Posterior vena cava (tissue), 2 donors: ENCODE measurements at regions of chr16 and their contacts with region 1.

Region 1: GRCh38 chr16:87834623-87835407 is 34.5 kb downstream of the SLC7A5 start:
- DNase-seq: no peak

Region 2: DNA sequence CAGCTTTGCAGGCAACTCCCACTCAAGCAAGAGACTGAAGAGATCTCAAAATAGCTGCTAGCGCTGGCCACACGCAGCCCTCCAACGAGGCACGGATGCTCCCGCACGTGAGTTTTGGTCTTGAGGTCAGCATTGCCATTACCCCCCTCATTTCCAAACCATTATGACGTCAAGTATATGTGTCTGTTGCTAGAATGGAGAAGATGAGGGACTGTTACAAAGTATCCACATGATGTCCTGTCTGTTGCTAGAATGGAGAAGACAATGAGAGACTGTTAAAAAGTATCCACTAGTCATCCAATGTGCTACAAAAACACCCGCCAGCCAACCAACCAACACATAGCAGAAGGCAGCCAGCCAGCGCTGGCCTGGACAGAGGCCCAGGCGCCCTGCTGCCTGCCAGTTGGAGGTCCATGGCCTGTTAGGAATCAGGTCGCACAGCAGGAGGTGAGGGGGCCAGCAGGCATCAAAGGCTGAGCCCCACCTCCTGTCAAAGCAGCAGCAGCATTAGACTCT is 93.8 kb before region 1 on chr16:
- intact Hi-C with region 1: no loop called
- DNase-seq: no peak

Region 3: DNA sequence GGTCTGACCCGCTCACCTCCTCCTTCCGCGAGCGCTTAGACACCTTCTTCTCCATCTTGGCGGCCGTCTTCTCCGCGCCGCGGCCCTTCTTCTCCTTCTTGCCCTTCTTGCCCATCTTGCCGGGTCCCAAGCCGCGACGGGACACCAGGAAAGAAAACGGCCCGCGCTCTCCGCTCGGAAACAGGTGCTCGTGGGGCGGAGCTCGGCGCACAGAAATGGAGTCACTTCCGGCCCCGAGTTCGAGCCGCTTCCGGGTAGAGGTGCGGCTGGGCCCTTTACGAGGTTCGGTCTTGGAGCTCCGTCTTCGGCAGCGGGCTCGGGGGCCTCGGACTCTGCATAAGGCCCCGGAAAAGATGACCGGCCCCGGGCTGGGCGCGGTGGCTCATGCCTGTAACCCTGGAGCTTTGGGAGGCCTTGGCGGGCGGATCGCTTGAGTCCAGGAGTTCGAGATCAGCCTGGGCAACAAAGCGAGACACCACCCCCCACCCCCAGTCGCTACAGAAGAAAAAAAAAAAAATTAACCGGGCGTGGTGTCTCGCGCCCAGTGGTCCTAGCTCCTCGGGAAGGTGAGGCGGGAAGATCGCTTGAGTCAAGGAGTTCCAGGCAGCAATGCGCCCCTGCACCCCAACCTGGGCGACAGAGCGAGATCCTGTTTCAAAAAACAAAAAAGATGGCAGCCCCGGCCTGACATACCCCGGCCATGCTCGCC is 68.9 kb before region 1 on chr16 and contains the start of gene KLHDC4:
- intact Hi-C with region 1: no loop called
- DNase-seq: peak; percentile 97
- total RNA-seq, gene KLHDC4: 19.8 to 21.9 TPM

Region 4: DNA sequence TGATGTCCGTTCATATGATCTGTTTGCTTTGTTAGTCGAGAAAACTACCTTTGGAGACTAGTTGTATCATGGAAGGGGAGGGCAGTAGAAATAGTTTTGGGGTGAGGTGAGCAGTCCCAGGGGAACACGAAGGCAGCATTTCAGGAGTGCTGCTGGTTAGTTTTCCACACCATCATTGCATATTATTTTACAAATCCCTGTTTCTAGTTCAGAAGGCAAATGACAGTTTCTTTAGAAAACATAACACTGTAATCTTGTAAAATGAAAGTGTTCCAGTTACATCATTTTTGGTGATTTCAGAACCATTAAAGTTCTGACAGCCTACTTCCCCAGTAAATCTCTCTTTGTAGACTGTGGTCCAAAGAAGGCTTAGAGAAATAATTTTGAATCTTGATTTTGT is 141.8 kb after region 1 on chr16:
- intact Hi-C with region 1: no loop called
- DNase-seq: no peak

Region 5: GRCh38 chr16:89314357-89314756 is 1479.5 kb after region 1 on chr16:
- intact Hi-C with region 1: loop called in 1 of 2 experiments (anchors 5 kb)
- DNase-seq: no peak